Esophagus muscularis mucosa (tissue), 4 donors: ENCODE measurements at regions of chr9 and their contacts with region 1.

Region 1: GRCh38 chr9:73038613-73039012 is 85.8 kb upstream of the ALDH1A1 start:
- DNase-seq: peak; percentile 94
- H3K4me3 ChIP-seq: peak overlapping the region; percentile 20 to 46 (median 34)
- H3K27ac ChIP-seq: peak overlapping the region; percentile 87 to 91 (median 88)
- H3K4me1 ChIP-seq: peaks cover 5 to 45% (median 33%) of the 10 kb centered on the region in 4 donors
- H3K27me3 ChIP-seq: no peaks in the 10 kb centered on the region
- CTCF ChIP-seq: no peak
- EP300 ChIP-seq: no peak
- POLR2A ChIP-seq: no peak

Region 2: DNA sequence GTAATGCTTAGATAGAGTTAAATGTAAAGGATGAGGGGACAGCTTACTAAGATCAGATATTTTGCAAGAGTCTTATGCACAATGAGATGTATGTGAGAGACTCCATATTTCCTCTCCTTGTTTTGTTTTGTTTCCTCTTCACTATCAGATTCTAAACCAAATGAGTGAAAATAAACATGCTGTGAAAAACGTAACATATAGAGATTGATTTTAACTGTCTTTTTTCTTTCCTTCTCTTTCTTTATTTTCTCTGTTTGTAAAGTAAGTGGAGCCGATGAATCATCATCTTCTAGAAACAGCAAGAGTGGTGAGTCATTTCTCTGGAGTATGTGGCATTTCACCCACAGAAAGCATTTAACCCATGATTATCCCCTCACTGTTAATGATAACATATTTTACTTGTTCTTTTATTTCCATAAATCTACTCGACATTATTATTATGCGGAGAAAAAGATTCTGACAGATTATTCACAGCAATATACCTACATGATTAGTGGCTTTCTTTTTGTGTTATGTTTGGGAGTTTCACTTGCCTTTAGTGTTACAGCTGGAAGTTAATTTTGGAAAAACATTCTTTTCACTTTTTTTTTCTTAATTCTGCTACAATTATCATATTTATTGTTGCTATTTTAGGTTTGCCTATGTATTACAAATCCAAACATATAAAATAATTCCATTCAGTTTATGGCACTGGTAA is 110.9 kb after region 1 on chr9:
- intact Hi-C with region 1: loop called (anchors 10 kb)
- DNase-seq: no peak
- H3K4me3 ChIP-seq: peak overlapping the region; percentile 5 to 23 (median 20)
- H3K27ac ChIP-seq: peak overlapping the region; percentile 28 to 70 (median 66)
- H3K4me1 ChIP-seq: peaks cover 11 to 50% (median 45%) of the 10 kb centered on the region in 4 donors
- H3K27me3 ChIP-seq: no peaks in the 10 kb centered on the region
- CTCF ChIP-seq: no peak
- EP300 ChIP-seq: no peak
- POLR2A ChIP-seq: no peak